ENCODE measurements at regions of chr20 and their contacts with region 1.

Region 1: DNA sequence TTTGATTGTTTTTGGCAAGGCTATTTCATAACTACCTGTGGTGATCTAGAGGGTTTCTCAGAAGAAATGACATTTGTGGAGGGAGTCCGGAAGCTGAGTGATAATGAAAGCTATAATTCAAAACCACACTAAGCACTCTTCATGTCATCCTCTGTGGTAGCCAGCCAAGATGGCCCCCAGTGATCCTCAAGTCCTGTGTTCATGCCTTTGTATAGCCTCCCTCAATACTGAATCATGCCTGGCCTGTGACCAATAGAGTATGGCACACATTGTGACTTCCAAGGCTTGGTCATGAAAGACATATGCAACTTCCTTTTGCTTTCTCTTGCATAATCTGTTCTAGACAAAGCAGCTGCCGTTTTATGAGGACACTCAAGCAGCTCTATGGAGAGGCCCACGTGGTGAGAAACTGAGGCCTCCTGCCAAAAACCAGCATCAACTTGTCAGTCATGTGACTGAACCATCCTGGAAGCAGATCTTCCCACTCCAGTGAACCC is 12.8 kb upstream of the DNAAF9 start:
- DNase-seq: peak in 1 of 2 donors; percentile 77
- H3K4me3 ChIP-seq: no peak overlapping the region
- H3K27ac ChIP-seq: peak overlapping the region; percentile 33 to 50
- H3K4me1 ChIP-seq: no peaks in the 10 kb centered on the region
- H3K27me3 ChIP-seq: no peaks in the 10 kb centered on the region
- CTCF ChIP-seq: no peak
- POLR2A ChIP-seq: no peak

Region 2: GRCh38 chr20:3250091-3250504 is 170.2 kb before region 1 on chr20:
- intact Hi-C with region 1: loop called (anchors 5 kb)
- DNase-seq: no peak
- H3K4me3 ChIP-seq: no peak overlapping the region
- H3K27ac ChIP-seq: no peak overlapping the region
- H3K4me1 ChIP-seq: no peaks in the 10 kb centered on the region
- H3K27me3 ChIP-seq: no peaks in the 10 kb centered on the region
- CTCF ChIP-seq: no peak
- POLR2A ChIP-seq: no peak

Measured in breast epithelium (tissue), 4 donors.